Activated naive CD4-positive, alpha-beta T cell treated with anti-CD3 and anti-CD28 coated beads for 36 hours (primary cell): ENCODE measurements at regions of chr1 and their contacts with region 1.

Region 1: GRCh38 chr1:23496490-23497181 is 12.7 kb upstream of the ASAP3 start:
- DNase-seq: no peak
- H3K4me3 Mint-ChIP-seq: no peak overlapping the region
- H3K27ac Mint-ChIP-seq: no peak overlapping the region
- H3K4me1 Mint-ChIP-seq: no peaks in the 10 kb centered on the region
- H3K27me3 Mint-ChIP-seq: no peaks in the 10 kb centered on the region

Region 2: DNA sequence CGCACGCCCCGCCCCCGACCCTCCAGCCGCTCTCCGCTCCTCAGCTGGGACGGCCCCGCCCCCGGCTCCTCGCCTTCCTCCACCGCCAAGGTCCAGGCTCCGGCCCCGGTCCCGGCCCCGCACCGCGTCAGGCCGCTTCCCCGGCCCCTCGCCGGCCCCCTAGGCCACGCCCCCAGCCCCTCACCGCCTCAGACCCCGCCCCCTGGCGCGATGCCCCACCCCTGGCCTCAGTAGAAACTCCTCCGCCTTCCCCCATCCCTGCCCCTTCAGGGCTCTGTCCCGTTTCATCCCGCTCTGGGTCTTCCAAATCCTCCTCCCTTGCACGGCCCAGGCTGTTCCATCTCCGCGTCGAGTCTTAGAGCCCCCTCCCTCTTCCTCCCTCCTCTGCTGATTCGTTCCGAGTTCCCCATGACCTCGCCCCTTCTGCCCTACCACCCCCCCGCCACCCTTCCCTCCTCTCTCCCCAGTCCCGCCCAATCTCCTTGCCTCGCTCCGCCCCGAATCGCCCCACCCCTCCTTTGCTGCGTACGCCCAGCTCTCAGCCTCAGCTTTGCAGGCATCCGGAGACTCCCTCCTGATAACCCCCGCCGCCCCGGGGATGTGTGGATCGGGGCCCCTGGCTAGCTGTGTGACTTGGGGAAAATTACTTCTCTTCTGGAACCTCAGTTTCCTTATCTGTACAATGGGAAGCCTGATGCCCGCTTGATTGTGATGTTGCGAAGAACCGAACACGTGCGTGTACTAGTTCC is 12.2 kb before region 1 on chr1:
- CTCF ChIA-PET with region 1: interaction called, 18 read pairs
- intact Hi-C with region 1: no loop called
- DNase-seq: peak; percentile 93
- H3K4me3 Mint-ChIP-seq: peak overlapping the region; percentile 83
- H3K27ac Mint-ChIP-seq: no peak overlapping the region
- H3K4me1 Mint-ChIP-seq: peaks cover 12% of the 10 kb centered on the region
- H3K27me3 Mint-ChIP-seq: peaks cover 15% of the 10 kb centered on the region

Region 3: GRCh38 chr1:23507507-23507906 is 10.9 kb after region 1 on chr1:
- CTCF ChIA-PET with region 1: interaction called, 41 read pairs
- intact Hi-C with region 1: no loop called
- DNase-seq: no peak
- H3K4me3 Mint-ChIP-seq: no peak overlapping the region
- H3K27ac Mint-ChIP-seq: no peak overlapping the region
- H3K4me1 Mint-ChIP-seq: no peaks in the 10 kb centered on the region
- H3K27me3 Mint-ChIP-seq: no peaks in the 10 kb centered on the region

Region 4: DNA sequence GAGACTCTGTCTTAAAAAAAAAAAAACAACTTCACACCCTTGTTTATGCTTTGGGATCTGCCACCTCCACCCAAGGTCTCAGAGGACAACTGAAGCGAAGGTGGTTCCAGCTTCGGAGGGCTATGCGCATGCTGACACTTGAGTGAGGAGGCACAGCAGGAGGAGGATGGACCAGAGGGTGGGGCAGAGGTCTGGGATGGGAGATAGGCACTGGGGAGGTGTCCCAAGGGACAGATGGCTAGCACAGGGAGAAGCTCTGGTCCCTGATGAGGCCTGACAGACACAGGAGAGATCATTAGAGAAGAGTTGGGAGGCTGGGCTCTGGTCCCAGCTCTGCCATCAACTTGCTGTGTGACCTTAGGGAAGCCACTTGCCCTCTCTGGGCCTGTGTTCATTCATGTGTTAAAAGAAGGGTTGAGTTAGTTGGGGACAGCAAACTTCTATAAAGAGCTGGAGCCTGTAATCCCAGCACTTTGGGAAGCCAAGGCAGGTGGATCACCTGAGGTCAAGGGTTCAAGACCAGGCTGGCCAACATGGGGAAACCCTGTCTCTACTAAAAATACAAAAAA is 17.6 kb after region 1 on chr1:
- CTCF ChIA-PET with region 1: interaction called, 41 read pairs
- intact Hi-C with region 1: no loop called
- DNase-seq: no peak
- H3K4me3 Mint-ChIP-seq: no peak overlapping the region
- H3K27ac Mint-ChIP-seq: no peak overlapping the region
- H3K4me1 Mint-ChIP-seq: no peaks in the 10 kb centered on the region
- H3K27me3 Mint-ChIP-seq: no peaks in the 10 kb centered on the region

Region 5: DNA sequence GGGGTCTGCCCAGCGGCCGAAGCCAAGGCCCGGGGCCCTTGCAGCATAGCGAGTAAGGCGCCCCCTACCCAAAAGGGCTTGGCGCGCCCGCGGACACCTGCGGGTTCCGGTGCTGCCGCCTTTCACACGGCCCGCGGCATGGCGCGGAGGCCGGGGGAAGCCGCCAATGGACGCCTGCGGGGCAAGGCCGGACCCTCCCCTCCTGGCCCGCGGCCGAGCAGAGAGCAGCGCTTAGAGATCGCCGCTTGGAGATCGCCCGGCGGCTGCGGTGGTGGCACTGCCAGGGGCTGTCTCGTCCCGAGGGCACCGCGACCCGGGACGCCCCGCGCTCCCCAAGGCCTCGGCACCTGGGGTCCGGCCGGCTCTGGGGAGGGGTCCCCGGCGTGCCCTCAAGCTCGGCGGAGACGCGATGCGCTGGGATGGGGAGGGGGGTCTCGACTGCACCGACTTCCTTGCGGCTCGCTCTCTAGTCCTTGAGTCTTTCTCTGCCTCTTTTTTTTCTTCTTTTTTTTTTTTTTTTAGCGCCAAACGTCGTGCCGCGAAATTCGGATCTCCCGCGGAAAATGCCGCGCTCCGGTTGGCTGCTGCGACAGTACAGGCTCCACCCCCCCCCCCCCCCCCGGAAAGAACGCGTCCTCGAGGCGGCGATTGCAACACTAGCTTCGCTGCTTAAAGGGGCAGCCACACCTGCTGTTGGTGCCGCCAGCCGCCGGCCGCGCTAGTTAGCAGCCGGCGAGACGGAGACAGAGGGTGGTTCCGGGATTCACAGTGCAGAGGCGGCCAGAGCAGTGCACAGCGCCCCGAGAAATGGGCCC is 34.3 kb after region 1 on chr1 and contains the start of gene E2F2:
- CTCF ChIA-PET with region 1: interaction called, 143 read pairs
- intact Hi-C with region 1: no loop called
- DNase-seq: peak; percentile 87
- H3K4me3 Mint-ChIP-seq: peak within 1 kb of the TSS; percentile 91
- H3K27ac Mint-ChIP-seq: peak within 1 kb of the TSS; percentile 95
- H3K4me1 Mint-ChIP-seq: peaks cover 56% of the 10 kb centered on the region
- H3K27me3 Mint-ChIP-seq: peaks cover 2% of the 10 kb centered on the region
- total RNA-seq, gene E2F2: 31.3 to 33.8 TPM

Region 6: DNA sequence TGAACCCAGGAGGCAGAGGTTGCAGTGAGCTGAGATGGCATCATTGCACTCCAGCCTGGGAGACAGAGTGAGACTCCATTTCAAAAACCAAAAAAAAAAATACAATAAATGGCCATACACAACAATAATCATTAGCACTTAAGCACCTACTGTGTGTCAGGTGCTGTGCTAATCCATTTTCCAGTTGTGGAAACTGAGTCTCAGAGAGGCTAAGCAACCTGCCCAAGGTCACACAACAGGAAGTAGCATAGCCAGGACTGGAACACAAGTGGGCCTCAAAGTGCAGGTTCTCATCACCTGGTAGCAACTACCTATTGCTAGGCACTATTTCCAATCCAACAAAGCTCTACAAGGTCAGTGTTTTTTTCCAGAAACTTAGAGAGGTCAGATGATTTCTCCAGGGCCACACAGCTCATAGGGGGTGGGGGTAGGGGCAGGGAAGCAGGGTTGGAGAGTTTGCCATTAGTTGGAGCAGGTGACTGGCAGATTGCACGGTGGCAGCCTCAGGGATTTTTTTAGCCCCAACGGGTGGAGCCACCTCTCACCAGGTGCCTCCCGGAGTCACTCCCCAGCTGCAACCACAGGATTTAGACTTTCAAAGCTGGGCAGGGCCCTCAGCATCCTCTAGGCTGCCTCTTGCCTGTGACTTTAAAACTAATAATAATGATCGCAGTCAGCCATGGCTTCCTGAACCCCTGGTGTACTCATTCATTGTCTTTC is 115.1 kb after region 1 on chr1:
- CTCF ChIA-PET with region 1: no interaction called
- intact Hi-C with region 1: no loop called
- DNase-seq: peak; percentile 82
- H3K4me3 Mint-ChIP-seq: no peak overlapping the region
- H3K27ac Mint-ChIP-seq: peak overlapping the region; percentile 88
- H3K4me1 Mint-ChIP-seq: peaks cover 71% of the 10 kb centered on the region
- H3K27me3 Mint-ChIP-seq: no peaks in the 10 kb centered on the region

Region 7: DNA sequence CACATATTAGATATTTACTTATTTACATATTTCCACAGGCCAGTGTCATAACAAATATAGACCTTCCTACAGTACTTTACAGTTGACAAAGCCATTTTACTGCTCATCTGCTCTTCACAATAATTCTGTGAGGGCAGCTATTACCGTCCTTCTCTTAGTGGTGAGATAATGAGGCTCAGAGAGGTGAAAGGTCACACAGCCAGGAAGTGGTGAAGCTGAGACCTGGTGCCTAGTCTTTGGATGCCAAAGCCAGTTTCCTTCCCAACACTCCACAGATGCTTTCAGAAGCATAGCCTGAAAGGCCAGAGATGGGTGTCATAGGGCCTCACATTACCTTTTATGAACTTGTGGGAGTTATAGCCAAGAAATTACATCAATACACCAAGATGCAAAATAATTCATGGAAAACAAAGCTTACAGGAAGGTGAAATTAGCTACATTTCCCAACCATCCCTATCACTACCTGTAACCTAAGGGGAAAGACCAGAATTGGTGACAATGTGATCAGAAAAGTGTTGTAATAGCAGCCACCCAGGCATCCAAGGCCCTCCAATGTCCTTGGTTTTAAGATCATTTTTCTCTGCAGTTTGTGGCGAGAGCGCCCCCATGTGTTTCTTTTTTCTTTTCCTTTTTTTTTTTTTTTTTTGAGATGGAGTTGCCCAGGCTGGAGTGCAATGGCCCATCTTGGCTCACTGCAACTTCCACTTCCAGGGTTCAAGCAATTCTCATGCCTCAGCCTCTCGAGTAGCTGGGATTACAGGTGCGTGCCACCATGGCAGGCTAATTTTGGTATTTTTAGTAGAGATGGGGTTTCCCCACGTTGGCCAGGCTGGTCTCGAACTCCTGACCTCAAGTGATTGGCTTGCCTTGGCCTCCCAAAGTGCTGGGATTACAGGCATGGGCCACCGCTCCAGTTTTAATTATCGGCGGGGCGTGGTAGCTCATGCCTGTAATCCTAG is 168.5 kb after region 1 on chr1:
- CTCF ChIA-PET with region 1: interaction called, 29 read pairs
- intact Hi-C with region 1: no loop called
- DNase-seq: peak; percentile 44
- H3K4me3 Mint-ChIP-seq: no peak overlapping the region
- H3K27ac Mint-ChIP-seq: peak overlapping the region; percentile 31
- H3K4me1 Mint-ChIP-seq: peaks cover 6% of the 10 kb centered on the region
- H3K27me3 Mint-ChIP-seq: no peaks in the 10 kb centered on the region

Region 8: GRCh38 chr1:23959041-23959460 is 462.4 kb after region 1 on chr1:
- CTCF ChIA-PET with region 1: no interaction called
- intact Hi-C with region 1: no loop called
- DNase-seq: peak; percentile 98
- H3K4me3 Mint-ChIP-seq: peak overlapping the region; percentile 99
- H3K27ac Mint-ChIP-seq: peak overlapping the region; percentile 100
- H3K4me1 Mint-ChIP-seq: peaks cover 59% of the 10 kb centered on the region
- H3K27me3 Mint-ChIP-seq: no peaks in the 10 kb centered on the region